ENCODE measurements at regions of chr2 and their contacts with region 1.

Region 1: GRCh38 chr2:39124000-39124745 is 3.3 kb upstream of the SOS1 start:
- DNase-seq: peak; percentile 93
- ATAC-seq: peak; percentile 82
- H3K4me3 ChIP-seq: peak overlapping the region; percentile 81
- H3K27ac ChIP-seq: peak overlapping the region; percentile 88
- H3K4me1 ChIP-seq: peaks cover 3% of the 10 kb centered on the region
- H3K27me3 ChIP-seq: no peaks in the 10 kb centered on the region
- CTCF ChIP-seq: peak; percentile 36; the same call in 1 of the 2 replicates
- POLR2A ChIP-seq: peak; percentile 54; the same call in 1 of the 2 replicates
- RAD21 ChIP-seq: no peak

Region 2: DNA sequence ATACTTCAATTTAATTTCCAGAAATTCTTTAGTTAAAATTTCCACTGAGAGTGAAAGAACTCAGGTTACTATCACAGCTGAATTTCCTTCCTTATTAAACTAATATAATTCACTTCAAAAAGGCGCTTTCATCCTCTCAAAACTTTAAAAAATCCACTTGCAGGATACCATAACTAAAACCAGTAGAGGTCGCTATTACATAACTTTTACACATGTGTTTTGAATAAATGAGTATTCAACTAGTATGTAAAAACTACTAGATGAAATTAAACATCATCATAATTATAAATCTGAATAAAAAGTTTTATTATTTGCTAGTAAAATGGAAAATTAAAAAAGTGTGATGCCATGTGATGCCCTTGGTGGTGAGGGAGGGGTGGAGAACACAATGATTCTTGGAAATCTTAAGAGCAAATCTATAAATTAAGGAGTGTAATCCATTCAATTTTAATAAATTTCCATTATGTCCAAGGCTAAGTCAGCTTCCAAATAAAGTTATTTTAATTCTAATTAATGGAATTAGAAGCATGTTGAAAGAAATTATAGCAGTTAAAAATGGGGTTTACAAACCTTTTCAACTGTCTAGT is 64.7 kb before region 1 on chr2:
- CTCF ChIA-PET with region 1: interaction called, 3 read pairs
- POLR2A ChIA-PET with region 1: interaction called, 13 read pairs
- dilution Hi-C with region 1: no loop called
- in situ Hi-C with region 1: no loop called
- intact Hi-C with region 1: loop called (anchors 2 kb)
- DNase-seq: peak; percentile 69
- ATAC-seq: peak; percentile 59
- H3K4me3 ChIP-seq: no peak overlapping the region
- H3K27ac ChIP-seq: no peak overlapping the region
- H3K4me1 ChIP-seq: no peaks in the 10 kb centered on the region; the same call in 1 of the 2 replicates
- H3K27me3 ChIP-seq: no peaks in the 10 kb centered on the region
- CTCF ChIP-seq: peak; percentile 76
- POLR2A ChIP-seq: no peak
- RAD21 ChIP-seq: peak; percentile 76

Region 3: DNA sequence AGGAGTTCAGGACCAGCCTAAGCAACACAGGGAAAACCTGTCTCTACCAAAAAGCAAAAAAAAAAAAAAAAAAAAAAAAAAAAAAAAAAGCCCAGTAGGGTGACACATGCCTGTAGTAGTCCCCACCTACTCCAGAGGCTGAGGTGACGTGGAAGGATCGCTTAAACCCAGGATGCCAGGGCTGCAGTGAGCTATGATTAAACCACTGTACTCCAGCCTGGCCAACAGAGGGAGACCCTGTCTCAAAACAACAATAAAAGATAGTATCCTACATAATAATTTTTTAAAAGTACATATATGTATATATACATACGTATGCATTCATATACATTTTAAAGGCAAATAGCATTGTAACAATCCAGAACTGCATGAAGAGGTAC is 55.0 kb before region 1 on chr2:
- CTCF ChIA-PET with region 1: no interaction called
- POLR2A ChIA-PET with region 1: no interaction called
- dilution Hi-C with region 1: no loop called
- in situ Hi-C with region 1: no loop called
- intact Hi-C with region 1: loop called (anchors 2 kb)
- DNase-seq: peak; percentile 26
- ATAC-seq: no peak
- H3K4me3 ChIP-seq: no peak overlapping the region
- H3K27ac ChIP-seq: peak overlapping the region; percentile 74; the same call in 1 of the 2 replicates
- H3K4me1 ChIP-seq: peaks cover 6% of the 10 kb centered on the region
- H3K27me3 ChIP-seq: no peaks in the 10 kb centered on the region
- CTCF ChIP-seq: 0 out of 2 replicates have a peak, but pooled peaks have one; percentile 17
- POLR2A ChIP-seq: no peak
- RAD21 ChIP-seq: 0 out of 2 replicates have a peak, but pooled peaks have one; percentile 7

Region 4: GRCh38 chr2:39227628-39228412 is 103.6 kb after region 1 on chr2:
- CTCF ChIA-PET with region 1: interaction called, 7 read pairs
- POLR2A ChIA-PET with region 1: no interaction called
- dilution Hi-C with region 1: no loop called
- in situ Hi-C with region 1: no loop called
- intact Hi-C with region 1: loop called (anchors 1 kb)
- DNase-seq: peak; percentile 62
- ATAC-seq: peak; percentile 77
- H3K4me3 ChIP-seq: no peak overlapping the region
- H3K27ac ChIP-seq: no peak overlapping the region
- H3K4me1 ChIP-seq: 0 out of 2 replicates have a peak, but pooled peaks cover 1% of the 10 kb centered on the region
- H3K27me3 ChIP-seq: no peaks in the 10 kb centered on the region
- CTCF ChIP-seq: peak; percentile 84
- POLR2A ChIP-seq: no peak
- RAD21 ChIP-seq: peak; percentile 77